ENCODE measurements at regions of chr10 and their contacts with region 1.

Region 1: DNA sequence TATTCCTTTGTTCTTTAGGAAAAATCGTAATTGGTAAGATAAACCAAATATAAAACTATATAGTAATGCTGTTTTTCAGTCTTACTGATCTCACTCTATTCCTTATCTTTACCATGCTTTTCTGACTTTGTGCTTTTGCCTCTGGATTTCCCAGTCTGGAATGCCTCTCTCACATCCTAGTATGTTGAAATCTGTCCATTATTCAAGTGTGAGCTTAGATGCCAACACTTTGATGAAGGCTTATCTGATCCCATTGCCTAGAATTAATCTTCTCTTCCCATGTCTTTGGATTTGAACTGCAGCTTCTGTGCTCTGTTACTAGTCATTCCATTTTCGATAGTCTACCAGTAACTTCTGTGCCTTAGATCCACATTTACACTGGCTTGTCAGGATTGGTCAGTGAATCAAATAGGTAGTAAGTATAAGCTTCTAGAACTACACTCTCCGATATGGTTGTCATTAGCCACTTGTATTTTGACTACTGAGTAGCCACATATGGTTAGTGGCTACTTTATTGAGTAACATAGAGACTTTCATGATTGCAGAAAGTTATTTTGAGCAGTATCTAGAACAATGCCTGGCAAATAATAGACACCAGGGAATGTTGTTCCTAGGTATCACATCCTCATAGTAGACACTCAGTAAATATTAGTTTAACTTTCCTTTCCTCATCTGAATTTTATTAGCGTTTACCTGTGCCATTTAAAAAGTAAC is 92.9 kb downstream of the BMPR1A start:
- DNase-seq: no peak
- ATAC-seq: no peak
- H3K4me3 ChIP-seq: no peak overlapping the region
- H3K27ac ChIP-seq: no peak overlapping the region
- H3K4me1 ChIP-seq: peaks cover 0 to 16% (median 0%) of the 10 kb centered on the region in 12 donors
- H3K27me3 ChIP-seq: no peaks in the 10 kb centered on the region
- CTCF ChIP-seq: no peak
- POLR2A ChIP-seq: no peak

Region 2: GRCh38 chr10:86769991-86770390 is 79.3 kb before region 1 on chr10:
- intact Hi-C with region 1: loop called in 1 of 10 experiments (anchors 10 kb)
- DNase-seq: no peak
- ATAC-seq: peak in 2 of 4 donors; percentile 22 to 49
- H3K4me3 ChIP-seq: no peak overlapping the region
- H3K27ac ChIP-seq: no peak overlapping the region
- H3K4me1 ChIP-seq: peaks cover 0 to 56% (median 27%) of the 10 kb centered on the region in 12 donors
- H3K27me3 ChIP-seq: peaks cover 0 to 4% (median 0%) of the 10 kb centered on the region in 9 donors
- CTCF ChIP-seq: no peak
- POLR2A ChIP-seq: no peak